ENCODE measurements at regions of chr5 and their contacts with region 1.

Region 1: GRCh38 chr5:133861161-133861737 is 107.2 kb downstream of the C5orf15 start:
- DNase-seq: no peak
- H3K4me3 ChIP-seq: no peak overlapping the region
- H3K27ac ChIP-seq: no peak overlapping the region
- H3K4me1 ChIP-seq: peaks cover 13% of the 10 kb centered on the region
- H3K27me3 ChIP-seq: no peaks in the 10 kb centered on the region
- CTCF ChIP-seq: no peak

Region 2: DNA sequence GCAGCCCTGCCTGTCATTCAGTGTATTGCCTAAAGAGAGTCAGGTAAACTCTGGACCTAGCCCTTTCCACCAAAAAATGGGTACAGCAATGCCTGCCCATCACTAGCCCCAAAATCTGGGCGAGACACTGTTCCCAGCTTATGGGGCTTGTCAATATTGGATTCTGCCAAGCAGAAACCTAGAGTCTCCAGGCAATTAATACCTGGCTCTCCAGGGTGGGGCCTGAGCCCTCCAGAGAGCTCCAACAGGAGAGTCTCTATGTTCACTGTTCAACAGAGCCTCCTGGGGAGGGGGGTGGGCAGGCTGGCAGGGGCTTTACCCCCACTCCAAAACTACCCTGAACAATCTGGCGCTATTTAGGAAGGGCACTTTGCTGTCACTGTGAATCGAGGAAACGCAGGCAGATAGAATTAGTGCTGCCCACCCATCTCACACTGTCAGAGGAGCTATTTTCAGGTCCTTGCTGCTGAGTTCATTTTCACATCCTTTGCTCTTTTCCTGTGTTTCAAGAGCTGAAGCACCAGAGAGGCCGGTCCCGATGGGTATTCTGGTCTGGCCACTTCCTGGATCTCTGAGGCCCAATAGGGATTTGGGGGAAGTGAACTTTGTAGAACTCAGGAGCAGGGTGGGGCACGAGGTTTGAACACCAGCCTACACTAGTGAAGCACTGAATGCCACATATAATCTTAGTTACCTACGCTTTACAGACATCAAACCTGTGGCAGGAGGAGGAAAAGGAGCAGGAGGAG is 14.6 kb before region 1 on chr5:
- CTCF ChIA-PET with region 1: interaction called, 11 read pairs
- POLR2A ChIA-PET with region 1: no interaction called
- intact Hi-C with region 1: no loop called
- DNase-seq: no peak
- H3K4me3 ChIP-seq: no peak overlapping the region
- H3K27ac ChIP-seq: no peak overlapping the region
- H3K4me1 ChIP-seq: no peaks in the 10 kb centered on the region
- H3K27me3 ChIP-seq: no peaks in the 10 kb centered on the region
- CTCF ChIP-seq: no peak

Region 3: DNA sequence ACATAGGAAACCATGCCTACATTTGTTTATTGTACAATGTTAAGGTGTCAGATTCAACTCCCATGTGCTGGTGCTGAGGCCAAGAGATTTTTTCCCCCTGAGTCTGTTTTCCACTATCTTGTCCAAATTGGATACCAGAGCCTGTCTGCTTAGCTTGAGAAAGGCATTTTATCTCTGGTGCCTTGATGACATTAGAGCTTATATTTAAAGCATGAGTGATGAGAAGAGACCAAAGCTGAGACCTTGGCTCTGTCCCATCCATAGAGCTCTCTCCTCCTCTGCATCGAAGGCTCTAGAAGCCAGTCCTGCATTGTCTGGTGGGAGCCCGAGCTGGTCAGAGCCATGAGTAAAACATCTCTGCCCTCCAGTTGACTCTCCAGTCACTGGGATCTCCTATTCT is 375.1 kb after region 1 on chr5:
- CTCF ChIA-PET with region 1: no interaction called
- POLR2A ChIA-PET with region 1: no interaction called
- intact Hi-C with region 1: no loop called
- DNase-seq: no peak
- H3K4me3 ChIP-seq: no peak overlapping the region
- H3K27ac ChIP-seq: no peak overlapping the region
- H3K4me1 ChIP-seq: no peaks in the 10 kb centered on the region
- H3K27me3 ChIP-seq: no peaks in the 10 kb centered on the region
- CTCF ChIP-seq: no peak

Measured in A673 (cell line).